MCF 10A (cell line): ENCODE measurements at regions of chr7 and their contacts with region 1.

Region 1: DNA sequence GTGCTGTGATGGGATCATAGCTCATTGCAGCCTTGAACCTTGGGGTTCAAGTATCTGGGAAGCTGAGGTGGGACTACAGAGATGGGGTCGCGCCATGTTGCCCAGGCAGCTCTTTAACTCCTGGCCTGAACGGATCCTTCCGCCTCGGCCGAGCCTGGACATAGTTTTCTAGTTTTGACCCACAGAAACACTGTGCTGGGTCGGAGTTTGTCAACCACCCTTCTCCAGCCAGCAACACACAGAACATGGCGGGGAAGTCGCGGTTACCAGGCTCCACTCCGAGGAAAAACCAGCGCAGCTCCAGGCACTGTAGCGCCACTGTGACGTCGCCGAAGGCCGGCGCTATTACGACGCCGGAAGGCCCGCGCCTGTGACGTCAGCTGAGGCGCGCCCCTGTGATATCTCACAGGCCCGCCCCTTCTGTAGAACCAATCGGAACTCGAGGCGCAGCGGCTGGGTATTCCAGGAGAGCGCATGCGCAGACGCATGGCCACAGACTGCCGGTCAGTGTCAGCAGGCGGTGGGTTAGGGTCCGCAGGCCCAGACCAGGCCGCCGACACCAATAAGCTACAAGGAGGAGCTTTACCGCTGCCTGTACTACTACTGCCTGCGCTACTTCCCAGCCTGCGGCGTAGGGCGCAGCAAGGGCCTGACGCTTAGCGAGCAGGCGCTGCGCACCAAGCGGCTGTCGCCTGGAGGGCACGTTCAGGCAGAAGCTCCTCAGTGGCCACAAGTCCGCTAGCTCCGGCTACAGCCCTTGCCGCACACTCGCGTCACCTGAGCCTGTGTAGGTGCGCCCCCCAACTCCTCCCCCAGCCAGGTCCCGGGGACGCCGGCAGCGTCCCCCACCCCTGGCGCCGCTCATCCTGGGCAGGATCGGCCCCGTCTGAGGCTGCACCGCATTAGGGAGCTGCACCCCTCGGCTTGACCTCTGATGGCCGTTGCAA is 135.2 kb upstream of the KCTD7 start:
- DNase-seq: peak; percentile 97
- H3K4me3 Mint-ChIP-seq: peak overlapping the region; percentile 85
- H3K27ac Mint-ChIP-seq: peak overlapping the region; percentile 96
- H3K4me1 Mint-ChIP-seq: no peaks in the 10 kb centered on the region
- H3K27me3 Mint-ChIP-seq: no peaks in the 10 kb centered on the region
- CTCF ChIP-seq: peak; percentile 20

Region 2: DNA sequence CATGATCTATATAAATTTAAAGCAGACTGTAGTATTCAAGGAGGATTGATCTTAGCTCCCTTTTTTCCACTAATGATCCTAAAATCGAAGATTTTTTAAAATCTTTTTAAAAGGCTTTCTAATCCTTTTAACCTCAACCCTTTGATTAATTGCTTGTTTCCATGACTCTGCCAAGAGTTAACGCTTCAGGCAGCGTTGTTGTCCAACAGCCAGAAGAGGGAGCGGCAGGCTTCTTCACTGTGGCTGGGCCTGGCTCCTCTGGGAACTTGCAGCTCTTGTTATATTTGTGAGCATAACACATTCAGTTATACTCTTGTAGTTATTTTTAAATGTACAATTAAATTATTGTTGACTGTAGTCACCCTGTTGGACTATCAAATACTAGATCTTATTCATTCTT is 352.6 kb before region 1 on chr7:
- CTCF ChIA-PET with region 1: interaction called, 5 read pairs
- POLR2A ChIA-PET with region 1: interaction called, 12 read pairs
- intact Hi-C with region 1: loop called (anchors 1 kb)
- DNase-seq: peak; percentile 71
- H3K4me3 Mint-ChIP-seq: no peak overlapping the region
- H3K27ac Mint-ChIP-seq: no peak overlapping the region
- H3K4me1 Mint-ChIP-seq: peaks cover 19% of the 10 kb centered on the region
- H3K27me3 Mint-ChIP-seq: no peaks in the 10 kb centered on the region
- CTCF ChIP-seq: peak; percentile 53